ENCODE measurements at regions of chr5 and their contacts with region 1.

Region 1: GRCh38 chr5:132866342-132867045 is at the starts of genes GDF9 and UQCRQ:
- DNase-seq: peak; percentile 95 to 97
- ATAC-seq: peak; percentile 97 to 99 (median 98)
- H3K4me3 ChIP-seq: peak within 1 kb of the TSS; percentile 99
- H3K27ac ChIP-seq: peak within 1 kb of the TSS; percentile 97
- H3K4me1 ChIP-seq: peaks cover 30% of the 10 kb centered on the region
- H3K27me3 ChIP-seq: no peaks in the 10 kb centered on the region
- CTCF ChIP-seq: peak; percentile 12
- total RNA-seq, gene GDF9: 0.57 to 1.2 (median 0.78) TPM
- total RNA-seq, gene UQCRQ: 696 to 985 (median 915) TPM

Region 2: GRCh38 chr5:132829742-132830435 is 36.6 kb before region 1 on chr5:
- intact Hi-C with region 1: loop called in 1 of 2 experiments (anchors 5 kb)
- DNase-seq: peak; percentile 79 to 85
- ATAC-seq: peak; percentile 86 to 97 (median 92)
- H3K4me3 ChIP-seq: peak overlapping the region; percentile 82
- H3K27ac ChIP-seq: peak overlapping the region; percentile 76
- H3K4me1 ChIP-seq: peaks cover 5% of the 10 kb centered on the region
- H3K27me3 ChIP-seq: peaks cover 0 to 35% (median 5%) of the 10 kb centered on the region in 3 donors
- CTCF ChIP-seq: peak; percentile 86

Measured in psoas muscle (tissue), 8 donors.